ENCODE measurements at regions of chr9 and their contacts with region 1.

Region 1: GRCh38 chr9:122350638-122351355 is 20.0 kb upstream of the PTGS1 start:
- DNase-seq: peak; percentile 89
- H3K4me3 ChIP-seq: peak overlapping the region in 1 of 2 experiments; percentile 31; a peak in 1 of 4 replicates
- H3K27ac ChIP-seq: no peak overlapping the region
- H3K4me1 ChIP-seq: peaks cover 0 to 6% of the 10 kb centered on the region in 2 experiments; a peak in 1 of 4 replicates
- H3K27me3 ChIP-seq: no peaks in the 10 kb centered on the region
- CTCF ChIP-seq: peak; percentile 91
- EP300 ChIP-seq: no peak
- RAD21 ChIP-seq: peak; percentile 99

Region 2: GRCh38 chr9:122092611-122093506 is 257.9 kb before region 1 on chr9 and contains the start of gene TTLL11:
- CTCF ChIA-PET with region 1: interaction called, 144 read pairs
- POLR2A ChIA-PET with region 1: no interaction called
- DNase-seq: peak; percentile 98
- H3K4me3 ChIP-seq: peak within 1 kb of the TSS; percentile 88 to 90
- H3K27ac ChIP-seq: peak within 1 kb of the TSS in 1 of 2 experiments; percentile 14; a peak in 1 of 4 replicates
- H3K4me1 ChIP-seq: peaks cover 6 to 19% of the 10 kb centered on the region in 2 experiments; a peak in 2 of 4 replicates
- H3K27me3 ChIP-seq: no peaks in the 10 kb centered on the region
- CTCF ChIP-seq: no peak
- EP300 ChIP-seq: no peak
- RAD21 ChIP-seq: no peak
- polyA plus RNA-seq, gene TTLL11: 6.0 and 6.8 TPM in 2 replicates

Region 3: GRCh38 chr9:122116040-122116439 is 234.8 kb before region 1 on chr9:
- CTCF ChIA-PET with region 1: interaction called, 528 read pairs
- POLR2A ChIA-PET with region 1: no interaction called
- DNase-seq: no peak
- H3K4me3 ChIP-seq: no peak overlapping the region
- H3K27ac ChIP-seq: no peak overlapping the region
- H3K4me1 ChIP-seq: no peaks in the 10 kb centered on the region; a peak in 1 of 4 replicates
- H3K27me3 ChIP-seq: peaks cover 9% of the 10 kb centered on the region; the same call in 1 of the 2 replicates
- CTCF ChIP-seq: no peak
- EP300 ChIP-seq: no peak
- RAD21 ChIP-seq: no peak

Region 4: GRCh38 chr9:122144836-122145591 is 205.8 kb before region 1 on chr9:
- CTCF ChIA-PET with region 1: interaction called, 15 read pairs
- POLR2A ChIA-PET with region 1: no interaction called
- DNase-seq: no peak
- H3K4me3 ChIP-seq: no peak overlapping the region
- H3K27ac ChIP-seq: no peak overlapping the region
- H3K4me1 ChIP-seq: no peaks in the 10 kb centered on the region
- H3K27me3 ChIP-seq: no peaks in the 10 kb centered on the region
- CTCF ChIP-seq: peak; percentile 41
- EP300 ChIP-seq: no peak
- RAD21 ChIP-seq: no peak

Region 5: GRCh38 chr9:122338994-122339393 is 11.8 kb before region 1 on chr9:
- CTCF ChIA-PET with region 1: interaction called, 26 read pairs
- POLR2A ChIA-PET with region 1: no interaction called
- DNase-seq: peak; percentile 80
- H3K4me3 ChIP-seq: no peak overlapping the region
- H3K27ac ChIP-seq: no peak overlapping the region; a peak in 1 of 4 replicates
- H3K4me1 ChIP-seq: peaks cover 0 to 15% of the 10 kb centered on the region in 2 experiments; a peak in 1 of 4 replicates
- H3K27me3 ChIP-seq: no peaks in the 10 kb centered on the region
- CTCF ChIP-seq: no peak
- EP300 ChIP-seq: no peak
- RAD21 ChIP-seq: no peak

Region 6: GRCh38 chr9:122389799-122390481 is 39.1 kb after region 1 on chr9:
- CTCF ChIA-PET with region 1: interaction called, 10 read pairs
- POLR2A ChIA-PET with region 1: no interaction called
- DNase-seq: no peak
- H3K4me3 ChIP-seq: no peak overlapping the region
- H3K27ac ChIP-seq: no peak overlapping the region
- H3K4me1 ChIP-seq: peaks cover 0 to 13% of the 10 kb centered on the region in 2 experiments; a peak in 1 of 4 replicates
- H3K27me3 ChIP-seq: no peaks in the 10 kb centered on the region
- CTCF ChIP-seq: no peak
- EP300 ChIP-seq: no peak
- RAD21 ChIP-seq: no peak